ENCODE measurements at regions of chr3 and their contacts with region 1.

Region 1: DNA sequence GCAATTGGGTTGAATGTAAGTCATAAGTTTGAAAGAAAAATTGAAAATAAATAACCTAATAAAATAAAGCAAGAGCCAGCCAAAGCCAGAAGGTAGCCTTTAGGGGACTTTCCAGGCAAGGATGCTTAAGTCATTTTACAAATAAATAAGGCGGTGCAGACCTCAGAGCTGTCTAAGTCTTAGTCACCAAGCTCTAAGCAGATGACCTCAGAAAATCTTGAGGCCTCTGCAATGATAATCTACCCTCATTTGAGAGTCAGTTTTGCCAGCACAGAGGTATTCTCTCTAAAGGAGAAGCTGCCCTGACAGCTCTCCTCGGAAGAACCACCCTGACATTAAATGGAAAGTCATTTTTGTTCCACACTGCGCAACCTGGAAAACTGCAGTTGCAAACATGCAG is 113.9 kb downstream of the OXNAD1 start:
- DNase-seq: peak in 2 of 9 experiments; percentile 42 to 54
- ATAC-seq: peak; percentile 28
- H3K4me3 ChIP-seq: no peak overlapping the region
- H3K4me3 Mint-ChIP-seq: peak overlapping the region; percentile 35
- H3K27ac ChIP-seq: peak overlapping the region in 1 of 2 experiments; percentile 17
- H3K27ac Mint-ChIP-seq: peak overlapping the region; percentile 88
- H3K4me1 ChIP-seq: peaks cover 62% of the 10 kb centered on the region
- H3K4me1 Mint-ChIP-seq: peaks cover 95% of the 10 kb centered on the region
- H3K27me3 ChIP-seq: no peaks in the 10 kb centered on the region
- H3K27me3 Mint-ChIP-seq: no peaks in the 10 kb centered on the region
- CTCF ChIP-seq: no peak

Region 2: GRCh38 chr3:16309558-16309957 is 69.4 kb before region 1 on chr3:
- CTCF ChIA-PET with region 1: no interaction called
- POLR2A ChIA-PET with region 1: no interaction called
- intact Hi-C with region 1: loop called in 1 of 2 experiments (anchors 5 kb)
- DNase-seq: peak in 7 of 9 experiments; percentile 34 to 88 (median 58)
- ATAC-seq: peak; percentile 73
- H3K4me3 ChIP-seq: no peak overlapping the region
- H3K4me3 Mint-ChIP-seq: peak overlapping the region; percentile 72
- H3K27ac ChIP-seq: peak overlapping the region; percentile 11 to 69
- H3K27ac Mint-ChIP-seq: peak overlapping the region; percentile 97
- H3K4me1 ChIP-seq: peaks cover 94% of the 10 kb centered on the region
- H3K4me1 Mint-ChIP-seq: peaks cover 92% of the 10 kb centered on the region
- H3K27me3 ChIP-seq: no peaks in the 10 kb centered on the region
- H3K27me3 Mint-ChIP-seq: no peaks in the 10 kb centered on the region
- CTCF ChIP-seq: no peak

Region 3: GRCh38 chr3:16338999-16339398 is 39.9 kb before region 1 on chr3:
- CTCF ChIA-PET with region 1: no interaction called
- POLR2A ChIA-PET with region 1: interaction called, 8 read pairs
- intact Hi-C with region 1: loop called in 1 of 2 experiments (anchors 5 kb)
- DNase-seq: peak in 4 of 9 experiments; percentile 8 to 79 (median 51)
- ATAC-seq: peak; percentile 64
- H3K4me3 ChIP-seq: no peak overlapping the region
- H3K4me3 Mint-ChIP-seq: no peak overlapping the region
- H3K27ac ChIP-seq: peak overlapping the region; percentile 41 to 72
- H3K27ac Mint-ChIP-seq: peak overlapping the region; percentile 87
- H3K4me1 ChIP-seq: peaks cover 43% of the 10 kb centered on the region
- H3K4me1 Mint-ChIP-seq: peaks cover 83% of the 10 kb centered on the region
- H3K27me3 ChIP-seq: no peaks in the 10 kb centered on the region
- H3K27me3 Mint-ChIP-seq: no peaks in the 10 kb centered on the region
- CTCF ChIP-seq: no peak

Region 4: DNA sequence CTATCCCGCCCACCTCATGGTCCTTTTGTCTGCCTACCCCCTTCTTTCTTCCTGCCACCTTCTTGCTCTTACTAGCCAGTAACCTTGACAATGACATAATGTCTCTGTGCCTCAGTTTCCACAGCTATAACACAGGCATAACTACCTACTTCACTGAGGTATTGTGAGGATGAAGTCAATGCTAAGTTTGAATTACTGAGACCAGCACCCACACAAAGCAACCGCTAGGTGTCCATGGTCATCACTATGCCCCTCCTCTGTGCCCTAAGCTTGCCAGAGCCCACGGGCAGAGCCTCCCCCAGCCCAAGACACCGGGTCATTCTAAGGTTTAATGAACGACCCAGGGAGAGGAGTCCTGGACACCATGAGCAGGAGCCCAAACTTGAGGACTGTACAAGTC is 12.3 kb before region 1 on chr3:
- CTCF ChIA-PET with region 1: no interaction called
- POLR2A ChIA-PET with region 1: no interaction called
- intact Hi-C with region 1: no loop called
- DNase-seq: no peak
- ATAC-seq: no peak
- H3K4me3 ChIP-seq: no peak overlapping the region
- H3K4me3 Mint-ChIP-seq: no peak overlapping the region
- H3K27ac ChIP-seq: no peak overlapping the region
- H3K27ac Mint-ChIP-seq: peak overlapping the region; percentile 56
- H3K4me1 ChIP-seq: peaks cover 11% of the 10 kb centered on the region
- H3K4me1 Mint-ChIP-seq: peaks cover 54% of the 10 kb centered on the region
- H3K27me3 ChIP-seq: no peaks in the 10 kb centered on the region
- H3K27me3 Mint-ChIP-seq: no peaks in the 10 kb centered on the region
- CTCF ChIP-seq: no peak

Region 5: GRCh38 chr3:16390581-16390980 is 11.7 kb after region 1 on chr3:
- CTCF ChIA-PET with region 1: no interaction called
- POLR2A ChIA-PET with region 1: interaction called, 3 read pairs
- intact Hi-C with region 1: loop called in 1 of 2 experiments (anchors 1 kb)
- DNase-seq: no peak
- ATAC-seq: no peak
- H3K4me3 ChIP-seq: no peak overlapping the region
- H3K4me3 Mint-ChIP-seq: no peak overlapping the region
- H3K27ac ChIP-seq: no peak overlapping the region
- H3K27ac Mint-ChIP-seq: no peak overlapping the region
- H3K4me1 ChIP-seq: peaks cover 7% of the 10 kb centered on the region
- H3K4me1 Mint-ChIP-seq: peaks cover 52% of the 10 kb centered on the region
- H3K27me3 ChIP-seq: no peaks in the 10 kb centered on the region
- H3K27me3 Mint-ChIP-seq: no peaks in the 10 kb centered on the region
- CTCF ChIP-seq: no peak

Region 6: DNA sequence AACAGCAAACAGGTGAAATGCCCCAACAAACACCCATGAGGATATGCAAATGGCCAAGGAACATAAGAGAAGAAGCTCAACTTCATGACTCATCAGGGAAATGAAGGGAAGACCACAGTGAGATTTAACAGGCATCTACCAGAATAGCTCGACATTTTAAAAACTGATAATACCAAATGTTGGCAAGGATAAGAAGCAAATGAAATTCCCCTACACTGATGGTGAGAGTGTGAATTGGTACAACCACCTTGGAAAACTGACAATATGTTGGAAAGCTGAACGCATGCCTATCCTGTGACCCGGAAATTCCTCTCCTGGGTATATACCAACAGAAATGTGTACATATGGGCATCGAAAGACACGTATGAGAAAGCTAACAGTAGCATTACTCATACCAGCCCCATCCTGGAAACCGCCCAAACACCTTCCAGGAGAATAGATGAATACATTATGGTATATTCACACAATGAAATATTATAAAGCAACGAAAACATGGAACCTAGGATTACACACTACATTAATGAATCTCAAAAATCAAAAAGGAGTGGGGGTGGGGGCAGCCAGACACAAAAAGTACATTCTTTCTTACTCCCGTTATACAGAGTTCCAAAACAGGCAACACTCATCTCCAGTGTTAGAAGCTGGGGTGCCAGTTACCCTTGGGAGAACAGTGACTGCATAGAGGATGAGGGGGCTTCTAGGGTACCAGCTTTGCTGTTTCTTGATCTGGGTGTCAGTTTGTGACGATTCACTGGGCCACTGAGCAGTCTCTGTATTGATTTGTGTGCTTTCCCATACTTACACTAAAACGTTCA is 117.7 kb after region 1 on chr3:
- CTCF ChIA-PET with region 1: no interaction called
- POLR2A ChIA-PET with region 1: interaction called, 4 read pairs
- intact Hi-C with region 1: loop called in 1 of 2 experiments (anchors 5 kb)
- DNase-seq: peak in 1 of 9 experiments; percentile 52
- ATAC-seq: peak; percentile 49
- H3K4me3 ChIP-seq: no peak overlapping the region
- H3K4me3 Mint-ChIP-seq: peak overlapping the region; percentile 32
- H3K27ac ChIP-seq: peak overlapping the region in 1 of 2 experiments; percentile 57
- H3K27ac Mint-ChIP-seq: peak overlapping the region; percentile 82
- H3K4me1 ChIP-seq: peaks cover 50% of the 10 kb centered on the region
- H3K4me1 Mint-ChIP-seq: peaks cover 66% of the 10 kb centered on the region
- H3K27me3 ChIP-seq: no peaks in the 10 kb centered on the region
- H3K27me3 Mint-ChIP-seq: no peaks in the 10 kb centered on the region
- CTCF ChIP-seq: no peak

Measured in CD8-positive, alpha-beta T cell (primary cell).